Calu3 (cell line): ENCODE measurements at regions of chr4 and their contacts with region 1.

Region 1: DNA sequence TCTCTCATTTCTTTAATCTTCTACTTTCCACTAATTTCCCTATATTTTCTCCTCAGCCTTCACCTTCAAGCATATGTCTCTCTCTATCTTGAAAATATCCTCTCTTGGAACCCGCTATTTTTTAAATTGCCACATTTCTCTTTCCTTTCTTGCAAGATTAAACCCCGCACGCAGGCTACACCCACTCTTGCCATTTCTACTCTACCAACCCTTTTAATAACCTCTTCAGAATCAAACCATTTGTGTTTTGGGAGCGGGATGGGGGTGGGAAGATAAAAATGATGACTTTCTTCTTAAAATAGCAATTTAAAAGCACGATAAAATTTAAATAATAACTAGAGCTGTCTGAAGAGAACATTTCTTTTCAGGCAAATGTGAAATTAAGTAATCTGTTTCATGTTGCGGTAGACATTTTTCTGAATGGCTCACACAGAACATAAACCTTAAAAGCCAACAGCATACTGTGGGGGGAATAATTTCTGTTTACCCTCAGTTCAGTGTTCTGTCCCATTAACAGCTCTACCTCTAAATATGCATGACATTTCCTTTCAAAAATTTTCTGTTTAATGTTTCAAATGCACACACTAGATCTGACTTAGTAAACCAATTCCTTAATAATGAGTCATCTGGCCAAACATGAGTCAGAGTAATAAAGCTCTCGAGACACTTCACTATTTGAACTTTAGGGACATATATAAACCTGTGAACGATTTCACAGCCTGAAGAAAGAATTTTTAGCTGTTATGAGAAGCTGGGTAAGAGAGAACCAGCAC is 20.5 kb downstream of the ARSJ start:
- DNase-seq: no peak
- H3K4me3 Mint-ChIP-seq: peak overlapping the region; percentile 57
- H3K27ac Mint-ChIP-seq: peak overlapping the region; percentile 96
- H3K4me1 Mint-ChIP-seq: peaks cover 75% of the 10 kb centered on the region
- H3K27me3 Mint-ChIP-seq: no peaks in the 10 kb centered on the region
- CTCF ChIP-seq: no peak

Region 2: DNA sequence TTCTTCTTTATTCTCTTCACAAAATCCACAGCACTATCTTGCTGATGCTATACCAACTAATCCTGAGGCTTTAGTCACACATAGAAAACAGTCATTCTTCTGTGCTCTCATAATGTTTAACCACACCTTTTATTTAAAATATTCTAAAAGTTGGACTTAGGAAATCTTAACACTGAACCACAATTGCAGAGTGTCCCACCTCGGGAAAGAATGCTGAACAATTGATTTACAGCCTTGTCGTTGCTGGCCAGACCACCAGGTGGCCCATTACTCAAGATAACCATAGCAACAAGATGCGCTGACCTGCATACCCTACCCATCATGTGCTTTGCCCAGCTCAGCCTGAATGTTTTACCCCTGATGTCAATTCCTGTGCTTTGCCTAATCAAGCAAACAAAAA is 80.3 kb before region 1 on chr4:
- CTCF ChIA-PET with region 1: no interaction called
- intact Hi-C with region 1: no loop called
- DNase-seq: peak; percentile 27
- H3K4me3 Mint-ChIP-seq: no peak overlapping the region
- H3K27ac Mint-ChIP-seq: no peak overlapping the region
- H3K4me1 Mint-ChIP-seq: peaks cover 7% of the 10 kb centered on the region
- H3K27me3 Mint-ChIP-seq: no peaks in the 10 kb centered on the region
- CTCF ChIP-seq: peak; percentile 26

Region 3: GRCh38 chr4:113979148-113979904 is 20.4 kb after region 1 on chr4 and contains the start of gene ARSJ:
- CTCF ChIA-PET with region 1: interaction called, 3 read pairs
- intact Hi-C with region 1: loop called (anchors 2 kb)
- DNase-seq: peak; percentile 37
- H3K4me3 Mint-ChIP-seq: peak within 1 kb of the TSS; percentile 76
- H3K27ac Mint-ChIP-seq: peak within 1 kb of the TSS; percentile 80
- H3K4me1 Mint-ChIP-seq: peaks cover 15% of the 10 kb centered on the region
- H3K27me3 Mint-ChIP-seq: no peaks in the 10 kb centered on the region
- CTCF ChIP-seq: no peak
- total RNA-seq, gene ARSJ: 12.5 and 13.3 TPM in 2 replicates

Region 4: DNA sequence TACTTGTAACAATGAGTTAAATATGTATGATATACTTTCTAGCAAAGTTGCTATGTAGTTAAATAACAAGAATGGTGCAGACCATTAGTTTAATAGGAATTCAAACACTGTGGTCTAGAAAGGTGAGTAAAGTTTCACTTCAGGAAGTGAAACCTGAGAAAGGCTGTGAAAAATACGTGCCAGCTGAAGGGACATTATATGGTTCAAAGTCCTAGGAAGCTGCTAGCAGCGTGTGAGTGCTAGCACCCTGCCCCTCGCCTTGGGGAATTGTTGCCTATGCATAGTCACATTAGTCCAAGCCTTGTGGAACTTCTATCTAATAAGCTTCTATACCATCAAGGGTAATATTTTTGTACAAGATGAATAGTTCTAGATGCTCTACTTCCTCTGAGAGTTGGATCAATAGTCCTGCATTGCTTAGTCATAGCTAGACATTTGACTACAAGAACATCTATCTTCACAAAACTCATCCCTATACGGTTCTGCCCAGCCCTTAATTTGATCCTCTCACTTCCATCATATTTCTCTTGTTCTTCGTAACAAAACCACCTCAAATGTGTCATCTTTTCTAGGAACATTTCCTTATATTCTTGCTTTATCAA is 66.3 kb after region 1 on chr4:
- CTCF ChIA-PET with region 1: interaction called, 3 read pairs
- intact Hi-C with region 1: loop called (anchors 5 kb)
- DNase-seq: peak; percentile 32
- H3K4me3 Mint-ChIP-seq: no peak overlapping the region
- H3K27ac Mint-ChIP-seq: no peak overlapping the region
- H3K4me1 Mint-ChIP-seq: no peaks in the 10 kb centered on the region
- H3K27me3 Mint-ChIP-seq: no peaks in the 10 kb centered on the region
- CTCF ChIP-seq: no peak

Region 5: DNA sequence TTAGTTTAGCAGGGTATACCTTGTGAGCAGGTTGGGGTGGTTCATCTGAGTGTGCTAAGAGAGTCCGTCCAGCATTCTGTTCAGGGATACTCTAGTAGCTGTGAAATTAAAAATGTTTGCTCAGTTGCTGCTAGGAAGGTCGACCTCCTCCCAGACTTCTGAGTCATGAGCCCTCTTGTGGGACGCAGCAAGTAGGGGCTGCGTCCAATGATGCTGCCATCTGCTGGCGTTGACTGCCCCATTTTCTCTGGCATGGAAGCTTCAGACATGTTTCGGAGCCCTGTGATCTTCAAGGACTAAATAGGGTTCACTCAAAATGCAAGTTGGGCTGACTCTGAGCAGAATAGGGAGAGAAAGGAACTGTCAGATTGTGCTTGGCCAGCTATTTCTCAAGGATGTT is 221.5 kb after region 1 on chr4:
- CTCF ChIA-PET with region 1: no interaction called
- intact Hi-C with region 1: loop called (anchors 5 kb)
- DNase-seq: peak; percentile 59
- H3K4me3 Mint-ChIP-seq: no peak overlapping the region
- H3K27ac Mint-ChIP-seq: no peak overlapping the region
- H3K4me1 Mint-ChIP-seq: peaks cover 13% of the 10 kb centered on the region
- H3K27me3 Mint-ChIP-seq: no peaks in the 10 kb centered on the region
- CTCF ChIP-seq: peak; percentile 34